ENCODE measurements at regions of chr5 and their contacts with region 1.

Region 1: GRCh38 chr5:4879693-4880303 is 260.3 kb upstream of the ADAMTS16 start:
- DNase-seq: peak in 2 of 3 donors; percentile 77
- ATAC-seq: peak; percentile 59
- H3K4me3 ChIP-seq: no peak overlapping the region
- H3K4me1 ChIP-seq: no peaks in the 10 kb centered on the region
- CTCF ChIP-seq: peak; percentile 83

Region 2: DNA sequence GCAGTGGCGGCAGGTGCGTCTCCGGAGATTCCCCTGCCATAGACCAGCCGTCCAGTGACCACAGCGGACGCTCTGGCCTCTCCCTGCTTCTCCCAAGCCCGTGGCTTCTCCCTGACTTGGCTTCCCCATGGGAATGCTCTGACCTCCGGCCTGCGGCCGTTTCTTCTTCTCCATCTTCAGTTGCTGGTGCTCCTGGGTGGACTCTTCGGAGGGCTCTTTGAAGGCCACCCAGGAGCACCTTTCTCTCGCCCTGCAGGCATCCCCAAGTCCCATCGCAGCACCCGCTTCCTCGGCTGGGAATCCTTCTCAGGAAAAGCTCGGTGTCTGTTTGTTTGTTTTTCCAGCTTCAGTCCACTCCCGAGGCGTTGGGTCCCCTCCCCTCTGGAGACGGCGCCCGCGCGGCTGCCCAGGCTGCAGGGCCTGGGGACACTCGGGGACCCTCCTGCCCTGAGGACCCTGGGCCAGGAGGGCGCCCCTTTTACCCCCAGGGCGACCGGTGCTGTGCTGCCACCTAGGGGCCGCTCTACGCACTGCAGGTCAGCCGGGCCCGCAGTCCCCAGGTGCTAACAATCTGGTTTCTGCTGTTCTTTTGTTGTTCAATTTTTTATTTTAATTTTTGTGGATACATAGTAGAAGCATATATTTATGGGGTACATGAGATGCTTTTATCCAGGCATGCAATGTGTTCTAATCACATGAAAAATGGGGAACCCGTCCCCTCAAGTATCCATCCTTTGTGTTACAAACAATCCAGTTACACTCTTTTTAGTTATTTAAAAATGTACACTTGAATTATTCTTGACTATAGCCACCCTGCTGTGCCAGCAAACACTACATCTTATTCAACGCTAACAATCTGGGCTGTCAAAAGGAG is 62.4 kb after region 1 on chr5:
- intact Hi-C with region 1: loop called in 1 of 2 experiments (anchors 5 kb)
- DNase-seq: peak in 2 of 3 donors; percentile 7 to 43
- ATAC-seq: peak; percentile 31
- H3K4me3 ChIP-seq: no peak overlapping the region
- H3K4me1 ChIP-seq: no peaks in the 10 kb centered on the region
- CTCF ChIP-seq: peak; percentile 77

Region 3: GRCh38 chr5:5011151-5011550 is 131.4 kb after region 1 on chr5:
- intact Hi-C with region 1: no loop called
- DNase-seq: no peak
- ATAC-seq: no peak
- H3K4me3 ChIP-seq: no peak overlapping the region
- H3K4me1 ChIP-seq: no peaks in the 10 kb centered on the region
- CTCF ChIP-seq: no peak

Region 4: GRCh38 chr5:5126444-5126843 is 246.6 kb after region 1 on chr5:
- intact Hi-C with region 1: no loop called
- DNase-seq: no peak
- ATAC-seq: no peak
- H3K4me3 ChIP-seq: no peak overlapping the region
- H3K4me1 ChIP-seq: no peaks in the 10 kb centered on the region
- CTCF ChIP-seq: no peak